ENCODE measurements at regions of chr9 and their contacts with region 1.

Region 1: DNA sequence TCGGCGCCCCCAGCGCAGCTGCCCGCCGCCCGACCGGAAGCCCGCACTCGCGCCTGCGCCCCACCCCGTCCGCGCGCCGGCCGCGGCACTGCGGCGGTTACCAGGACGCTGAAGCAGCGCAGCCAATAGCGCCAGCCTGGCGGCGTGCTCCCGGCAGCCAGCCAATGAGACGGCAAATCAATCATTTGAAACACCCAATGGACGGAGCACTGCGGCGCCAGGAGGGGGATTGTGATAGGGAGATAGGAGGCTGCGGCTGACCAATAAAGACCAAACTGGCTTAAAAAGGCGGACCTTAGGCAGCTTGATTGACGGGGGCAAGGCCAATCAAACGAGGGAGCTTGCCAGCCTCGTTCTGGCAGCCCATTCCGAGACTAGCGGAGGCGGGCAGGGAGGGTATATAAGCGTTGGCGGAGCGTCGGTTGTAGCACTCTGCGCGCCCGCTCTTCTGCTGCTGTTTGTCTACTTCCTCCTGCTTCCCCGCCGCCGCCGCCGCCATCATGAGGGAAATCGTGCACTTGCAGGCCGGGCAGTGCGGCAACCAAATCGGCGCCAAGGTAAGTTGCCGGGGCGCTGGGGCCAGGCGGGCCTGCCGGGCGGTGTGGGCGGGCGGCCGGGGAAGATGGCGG is at the start of gene TUBB4B:
- DNase-seq: peak; percentile 99
- ATAC-seq: peak; percentile 75
- H3K4me3 Mint-ChIP-seq: peak within 1 kb of the TSS; percentile 82
- H3K27ac Mint-ChIP-seq: peak within 1 kb of the TSS; percentile 90
- H3K4me1 Mint-ChIP-seq: peaks cover 31% of the 10 kb centered on the region
- H3K27me3 Mint-ChIP-seq: no peaks in the 10 kb centered on the region
- total RNA-seq, gene TUBB4B: 353 to 375 TPM

Region 2: GRCh38 chr9:137046098-137046787 is 194.7 kb before region 1 on chr9 and contains the start of gene NPDC1:
- CTCF ChIA-PET with region 1: interaction called, 10 read pairs
- DNase-seq: peak; percentile 89
- ATAC-seq: peak; percentile 82
- H3K4me3 Mint-ChIP-seq: peak within 1 kb of the TSS; percentile 71
- H3K27ac Mint-ChIP-seq: no peak within 1 kb of the TSS
- H3K4me1 Mint-ChIP-seq: peaks cover 16% of the 10 kb centered on the region
- H3K27me3 Mint-ChIP-seq: peaks cover 43% of the 10 kb centered on the region
- total RNA-seq, gene NPDC1: 30.4 to 55.6 TPM

Region 3: DNA sequence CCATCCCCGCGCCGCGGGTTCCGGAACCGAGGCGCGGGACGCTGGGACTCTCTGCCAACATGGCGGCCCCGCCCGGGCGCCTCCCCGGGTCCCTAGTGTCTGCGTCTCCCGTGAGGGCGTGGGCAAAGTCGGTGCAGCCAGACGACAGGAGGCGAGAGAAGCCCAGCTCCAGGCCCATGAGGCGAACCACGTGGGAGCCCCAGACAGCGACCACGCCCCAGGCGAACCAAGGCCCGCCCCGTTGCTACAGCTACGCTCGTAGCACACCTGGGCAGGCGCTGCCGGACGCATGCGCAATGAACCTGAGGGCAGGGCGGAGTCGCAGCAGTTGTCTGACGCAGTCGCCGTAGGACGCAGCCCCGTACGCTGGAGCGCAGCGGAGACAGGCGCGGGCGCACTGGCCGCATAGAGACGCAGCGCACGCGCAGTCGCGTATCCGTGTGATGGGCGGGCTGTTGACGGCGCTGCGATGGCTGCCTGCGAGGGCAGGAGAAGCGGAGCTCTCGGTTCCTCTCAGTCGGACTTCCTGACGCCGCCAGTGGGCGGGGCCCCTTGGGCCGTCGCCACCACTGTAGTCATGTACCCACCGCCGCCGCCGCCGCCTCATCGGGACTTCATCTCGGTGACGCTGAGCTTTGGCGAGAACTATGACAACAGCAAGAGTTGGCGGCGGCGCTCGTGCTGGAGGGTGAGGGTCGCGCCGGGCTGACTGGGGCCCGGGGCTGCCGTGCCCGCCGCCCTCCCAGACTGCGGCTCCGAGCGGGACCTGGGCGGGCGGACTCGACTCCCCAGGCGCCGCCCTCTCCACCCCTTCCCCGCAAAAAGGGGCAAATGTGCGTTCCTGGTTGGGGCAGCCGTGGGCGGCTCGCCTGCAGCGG is 154.2 kb before region 1 on chr9 and contains the start of gene MAN1B1:
- CTCF ChIA-PET with region 1: interaction called, 19 read pairs
- DNase-seq: peak; percentile 100
- ATAC-seq: peak; percentile 86
- H3K4me3 Mint-ChIP-seq: peak within 1 kb of the TSS; percentile 82
- H3K27ac Mint-ChIP-seq: peak within 1 kb of the TSS; percentile 90
- H3K4me1 Mint-ChIP-seq: peaks cover 41% of the 10 kb centered on the region
- H3K27me3 Mint-ChIP-seq: no peaks in the 10 kb centered on the region
- total RNA-seq, gene MAN1B1: 43.8 to 60.6 TPM

Region 4: GRCh38 chr9:137114610-137115391 is 126.2 kb before region 1 on chr9 and contains the start of gene DPP7:
- CTCF ChIA-PET with region 1: interaction called, 91 read pairs
- DNase-seq: peak; percentile 85
- ATAC-seq: peak; percentile 96
- H3K4me3 Mint-ChIP-seq: peak within 1 kb of the TSS; percentile 66
- H3K27ac Mint-ChIP-seq: peak within 1 kb of the TSS; percentile 52
- H3K4me1 Mint-ChIP-seq: peaks cover 10% of the 10 kb centered on the region
- H3K27me3 Mint-ChIP-seq: no peaks in the 10 kb centered on the region
- total RNA-seq, gene DPP7: 271 to 321 TPM

Region 5: DNA sequence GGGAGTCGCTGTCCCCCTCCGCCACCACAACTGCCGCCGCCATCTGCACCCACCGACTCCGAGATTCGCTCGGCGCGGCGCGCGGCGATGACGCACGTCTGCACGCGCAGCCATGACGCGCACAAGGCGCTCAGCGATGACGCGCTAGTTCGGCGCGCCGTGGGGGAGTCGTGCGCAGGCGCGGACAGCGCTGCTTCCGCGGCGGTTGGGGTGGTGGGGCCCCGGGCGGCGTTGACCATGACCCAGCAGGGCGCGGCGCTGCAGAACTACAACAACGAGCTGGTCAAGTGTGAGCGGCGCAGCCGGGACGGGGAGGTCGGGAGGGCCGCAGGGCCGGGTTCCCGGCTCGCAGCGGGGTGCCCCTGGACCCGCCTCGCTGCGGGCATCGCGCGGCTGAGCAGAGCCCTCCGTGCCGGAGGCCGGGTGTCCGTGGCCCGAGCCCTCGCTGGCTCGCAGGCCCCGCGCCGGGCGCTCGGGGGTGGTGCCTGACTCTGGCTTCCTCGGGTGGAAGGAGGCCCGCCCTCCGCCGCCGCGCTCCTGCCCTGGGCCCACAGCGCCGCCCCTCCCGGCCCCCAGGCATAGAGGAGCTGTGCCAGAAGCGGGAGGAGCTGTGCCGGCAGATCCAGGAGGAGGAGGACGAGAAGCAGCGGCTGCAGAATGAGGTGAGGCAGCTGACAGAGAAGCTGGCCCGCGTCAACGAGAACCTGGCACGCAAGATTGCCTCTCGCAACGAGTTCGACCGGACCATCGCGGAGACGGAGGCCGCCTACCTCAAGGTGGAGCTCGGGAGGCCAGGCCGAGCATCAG is 52.3 kb before region 1 on chr9 and contains the starts of genes ANAPC2 and SSNA1:
- CTCF ChIA-PET with region 1: interaction called, 15 read pairs
- DNase-seq: peak; percentile 93
- ATAC-seq: peak; percentile 81
- H3K4me3 Mint-ChIP-seq: peak within 1 kb of the TSS; percentile 93
- H3K27ac Mint-ChIP-seq: peak within 1 kb of the TSS; percentile 92
- H3K4me1 Mint-ChIP-seq: peaks cover 35% of the 10 kb centered on the region
- H3K27me3 Mint-ChIP-seq: no peaks in the 10 kb centered on the region
- total RNA-seq, gene ANAPC2: 59.8 to 69.7 TPM
- total RNA-seq, gene SSNA1: 80.2 to 91.3 TPM

Region 6: DNA sequence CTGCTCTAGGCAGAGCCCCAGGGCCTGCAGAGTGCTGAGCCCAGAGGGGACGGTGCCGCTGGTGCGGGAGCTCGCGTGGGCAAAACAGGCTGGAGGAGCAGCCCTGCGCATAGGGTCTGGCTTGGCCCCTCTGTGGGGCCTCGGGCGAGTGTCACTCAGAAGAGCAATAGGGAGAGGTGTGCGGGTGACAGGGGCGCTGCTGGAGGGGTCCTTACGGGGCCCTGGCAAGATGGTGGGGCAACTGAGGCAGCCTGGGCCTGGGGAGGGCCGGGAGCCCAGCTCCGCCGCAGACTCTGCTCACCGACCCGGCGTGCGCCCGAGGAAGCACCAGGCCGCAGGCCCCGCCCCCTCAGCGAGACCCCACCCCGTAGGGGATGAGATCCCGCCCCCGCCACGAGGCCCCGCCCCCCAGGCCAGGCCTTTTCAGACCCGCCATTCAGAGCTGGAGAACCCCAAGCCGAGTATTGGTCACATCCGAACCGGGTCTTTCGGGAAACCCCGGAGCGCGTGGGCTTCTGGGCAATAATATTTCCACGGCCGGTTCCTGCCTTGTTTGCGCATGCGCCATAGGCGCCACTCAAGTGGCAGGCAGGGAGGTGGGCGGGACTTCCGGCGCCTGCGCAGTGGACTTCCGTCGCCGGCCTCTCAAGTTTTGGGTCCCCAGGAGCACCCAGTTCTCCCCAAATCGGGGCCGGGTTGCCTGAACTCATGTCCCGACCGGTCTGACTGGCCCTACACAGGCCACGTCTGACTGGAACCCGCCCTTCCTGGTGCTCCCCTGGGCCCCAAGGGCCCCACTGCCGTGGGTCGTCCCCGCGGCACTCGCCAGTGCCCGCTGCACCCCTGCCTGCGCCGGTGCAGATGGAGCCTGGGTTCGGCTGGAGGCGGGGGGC is 17.7 kb before region 1 on chr9:
- CTCF ChIA-PET with region 1: interaction called, 110 read pairs
- DNase-seq: peak; percentile 99
- ATAC-seq: peak; percentile 91
- H3K4me3 Mint-ChIP-seq: peak overlapping the region; percentile 72
- H3K27ac Mint-ChIP-seq: peak overlapping the region; percentile 72
- H3K4me1 Mint-ChIP-seq: peaks cover 18% of the 10 kb centered on the region
- H3K27me3 Mint-ChIP-seq: no peaks in the 10 kb centered on the region

Region 7: DNA sequence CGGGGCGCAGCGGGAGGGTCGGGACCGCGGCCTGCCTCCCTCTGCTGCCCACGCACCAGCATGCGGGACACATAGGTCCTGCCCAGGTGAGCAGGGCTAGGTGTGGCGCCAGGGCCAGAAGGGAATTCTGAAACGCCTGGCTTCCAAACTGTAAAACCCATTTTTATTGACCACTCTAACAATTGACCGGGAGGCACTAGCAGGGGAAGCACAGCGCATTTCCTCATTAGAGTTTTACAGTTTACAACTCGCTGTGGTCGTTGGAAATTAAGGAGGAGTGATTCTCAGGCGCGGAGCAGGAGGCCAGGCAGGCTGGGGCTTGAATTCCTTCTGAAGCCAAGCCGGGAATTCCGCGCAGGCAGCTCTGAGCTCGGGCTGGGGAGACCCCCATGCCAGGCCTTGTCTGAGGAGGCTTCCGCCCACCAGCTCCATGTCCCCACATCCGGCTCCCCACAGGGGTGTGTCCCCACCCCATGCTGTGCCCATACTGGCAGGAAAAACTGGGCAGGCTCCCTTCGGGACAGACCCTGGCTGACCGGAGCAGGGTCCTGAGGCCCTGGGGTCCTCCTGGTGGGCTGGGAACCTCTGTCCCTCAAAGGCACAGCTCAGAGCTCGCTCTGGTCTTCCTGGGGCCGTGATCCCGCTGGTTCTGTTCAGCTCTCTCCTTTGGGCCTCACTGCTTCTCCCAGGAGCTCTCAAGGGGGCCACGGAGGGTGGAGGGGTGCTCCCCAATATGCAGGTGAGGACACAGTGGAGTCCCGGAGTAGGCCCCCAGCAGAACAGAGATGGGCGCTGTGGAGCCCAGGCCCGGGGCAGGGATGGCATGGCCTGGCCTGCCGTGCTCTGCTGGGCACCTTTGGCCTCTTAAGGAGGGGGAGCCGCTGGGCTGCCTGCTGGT is 62.3 kb after region 1 on chr9:
- CTCF ChIA-PET with region 1: no interaction called
- DNase-seq: no peak
- ATAC-seq: no peak
- H3K4me3 Mint-ChIP-seq: no peak overlapping the region
- H3K27ac Mint-ChIP-seq: no peak overlapping the region
- H3K4me1 Mint-ChIP-seq: peaks cover 17% of the 10 kb centered on the region
- H3K27me3 Mint-ChIP-seq: peaks cover 26% of the 10 kb centered on the region